Mammary epithelial cell (primary cell): ENCODE measurements at regions of chrX and their contacts with region 1.

Region 1: DNA sequence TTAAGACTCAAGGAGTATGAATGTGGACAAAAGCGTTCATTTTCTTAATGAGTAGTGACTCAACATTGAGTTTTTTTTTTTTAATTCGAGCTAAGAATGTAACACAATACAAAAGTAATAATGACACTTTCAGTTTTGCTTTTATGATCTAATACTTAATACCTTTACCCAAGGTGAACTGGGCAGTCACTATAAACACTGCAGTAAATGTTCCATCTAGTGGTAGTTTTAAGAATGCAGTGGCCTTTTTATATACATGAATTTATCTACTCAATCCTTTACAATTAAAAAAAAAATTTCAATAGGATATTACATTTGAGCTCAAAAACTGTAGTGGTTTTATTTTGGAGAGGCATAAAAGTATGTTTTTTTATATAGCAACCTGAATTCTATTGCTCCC is 33.9 kb downstream of the PDK3 start:
- DNase-seq: peak; percentile 25
- H3K4me3 ChIP-seq: no peak overlapping the region
- H3K27ac ChIP-seq: no peak overlapping the region
- H3K4me1 ChIP-seq: no peaks in the 10 kb centered on the region
- H3K27me3 ChIP-seq: no peaks in the 10 kb centered on the region
- CTCF ChIP-seq: peak; percentile 63 to 66

Region 2: DNA sequence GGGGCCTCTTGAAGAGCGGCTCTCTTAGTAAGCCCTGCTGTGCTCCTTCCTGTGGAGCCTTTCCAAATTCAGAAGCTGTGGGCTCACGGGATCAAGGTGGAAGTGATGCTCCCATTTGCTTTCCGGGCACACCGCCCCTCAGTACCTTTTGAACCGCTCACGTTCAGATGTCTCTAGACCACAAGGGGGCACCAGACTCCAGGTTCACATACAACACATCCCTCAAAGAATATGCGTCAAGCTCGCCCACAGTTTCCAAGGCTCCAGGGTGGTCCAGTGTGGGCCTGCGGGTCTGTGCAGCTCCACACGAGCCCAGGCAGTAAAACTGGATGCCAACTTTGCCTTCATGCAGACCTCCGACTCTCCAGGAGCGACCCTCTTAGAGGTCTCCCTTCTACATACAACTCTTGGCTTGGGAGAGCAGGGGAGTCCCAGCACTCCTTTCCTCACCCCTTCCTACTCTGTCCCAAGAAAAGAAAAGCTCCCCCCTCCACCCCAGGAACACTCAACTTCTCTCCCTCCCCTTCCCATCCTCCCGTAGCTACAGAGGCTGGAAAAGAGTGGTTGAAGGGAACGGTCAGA is 127.5 kb before region 1 on chrX:
- CTCF ChIA-PET with region 1: no interaction called
- dilution Hi-C with region 1: no loop called
- in situ Hi-C with region 1: no loop called
- intact Hi-C with region 1: loop called (anchors 1 kb)
- DNase-seq: peak; percentile 41
- H3K4me3 ChIP-seq: no peak overlapping the region
- H3K27ac ChIP-seq: no peak overlapping the region
- H3K4me1 ChIP-seq: no peaks in the 10 kb centered on the region
- H3K27me3 ChIP-seq: peaks cover 8% of the 10 kb centered on the region
- CTCF ChIP-seq: peak; percentile 77 to 80

Region 3: DNA sequence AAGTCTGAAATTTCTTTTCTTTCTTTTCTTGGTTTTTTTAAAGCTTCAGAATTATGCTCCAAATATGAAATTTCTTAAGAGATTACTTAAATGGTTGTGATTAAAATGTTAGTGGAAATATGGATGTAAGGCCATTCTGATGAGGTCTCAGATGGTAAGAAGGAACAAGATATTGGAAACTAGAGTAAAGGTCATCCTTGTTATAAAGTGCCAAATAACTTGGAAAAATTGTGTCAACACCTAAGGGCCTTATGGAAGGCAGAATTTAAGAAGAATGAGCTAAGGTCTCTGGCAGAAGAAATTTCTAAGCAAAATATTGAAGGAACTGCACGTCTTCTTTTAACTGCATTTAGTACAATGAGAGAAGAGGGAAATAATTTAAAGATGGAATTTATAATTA is 84.0 kb before region 1 on chrX:
- CTCF ChIA-PET with region 1: no interaction called
- dilution Hi-C with region 1: loop called (anchors 5 kb)
- in situ Hi-C with region 1: no loop called
- intact Hi-C with region 1: no loop called
- DNase-seq: no peak
- H3K4me3 ChIP-seq: no peak overlapping the region
- H3K27ac ChIP-seq: no peak overlapping the region
- H3K4me1 ChIP-seq: no peaks in the 10 kb centered on the region
- H3K27me3 ChIP-seq: peaks cover 2% of the 10 kb centered on the region
- CTCF ChIP-seq: no peak

Region 4: GRCh38 chrX:24643128-24643527 is 144.2 kb after region 1 on chrX:
- CTCF ChIA-PET with region 1: no interaction called
- dilution Hi-C with region 1: no loop called
- in situ Hi-C with region 1: no loop called
- intact Hi-C with region 1: no loop called
- DNase-seq: peak; percentile 35
- H3K4me3 ChIP-seq: no peak overlapping the region
- H3K27ac ChIP-seq: no peak overlapping the region
- H3K4me1 ChIP-seq: peaks cover 9% of the 10 kb centered on the region
- H3K27me3 ChIP-seq: no peaks in the 10 kb centered on the region
- CTCF ChIP-seq: no peak